Heart left ventricle (tissue), 16 donors: ENCODE measurements at regions of chr11 and their contacts with region 1.

Region 1: GRCh38 chr11:16809886-16810668 is 71.6 kb downstream of the C11orf58 start:
- DNase-seq: peak; percentile 74 to 91 (median 79)
- ATAC-seq: peak; percentile 76 to 86 (median 78)
- H3K4me3 ChIP-seq: no peak overlapping the region
- H3K27ac ChIP-seq: peak overlapping the region in 10 of 12 donors; percentile 18 to 79 (median 44)
- H3K4me1 ChIP-seq: peaks cover 4 to 97% (median 36%) of the 10 kb centered on the region in 12 donors
- H3K27me3 ChIP-seq: no peaks in the 10 kb centered on the region
- CTCF ChIP-seq: no peak
- POLR2A ChIP-seq: no peak

Region 2: DNA sequence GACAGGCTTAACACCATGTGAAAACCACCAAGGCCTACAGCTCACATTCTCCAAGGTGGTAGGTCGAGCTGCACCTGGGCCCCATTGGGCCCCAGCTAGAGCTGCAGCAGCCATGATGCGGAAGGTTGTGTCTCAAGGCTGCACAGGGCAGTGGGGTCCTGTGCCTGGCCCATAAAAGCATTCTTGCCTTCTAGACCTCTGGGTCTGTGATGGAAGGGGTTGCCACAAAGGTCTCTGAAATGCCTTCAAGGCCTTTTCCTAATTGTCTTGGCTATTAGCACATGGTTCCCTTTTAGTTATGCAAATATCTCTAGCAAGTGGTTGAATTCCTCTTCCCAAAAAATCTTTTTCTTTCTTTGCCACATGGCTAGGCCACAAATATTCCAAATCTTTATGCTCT is 124.2 kb before region 1 on chr11:
- intact Hi-C with region 1: no loop called
- DNase-seq: no peak
- ATAC-seq: no peak
- H3K4me3 ChIP-seq: no peak overlapping the region
- H3K27ac ChIP-seq: no peak overlapping the region
- H3K4me1 ChIP-seq: no peaks in the 10 kb centered on the region
- H3K27me3 ChIP-seq: no peaks in the 10 kb centered on the region
- CTCF ChIP-seq: no peak
- POLR2A ChIP-seq: no peak

Region 3: DNA sequence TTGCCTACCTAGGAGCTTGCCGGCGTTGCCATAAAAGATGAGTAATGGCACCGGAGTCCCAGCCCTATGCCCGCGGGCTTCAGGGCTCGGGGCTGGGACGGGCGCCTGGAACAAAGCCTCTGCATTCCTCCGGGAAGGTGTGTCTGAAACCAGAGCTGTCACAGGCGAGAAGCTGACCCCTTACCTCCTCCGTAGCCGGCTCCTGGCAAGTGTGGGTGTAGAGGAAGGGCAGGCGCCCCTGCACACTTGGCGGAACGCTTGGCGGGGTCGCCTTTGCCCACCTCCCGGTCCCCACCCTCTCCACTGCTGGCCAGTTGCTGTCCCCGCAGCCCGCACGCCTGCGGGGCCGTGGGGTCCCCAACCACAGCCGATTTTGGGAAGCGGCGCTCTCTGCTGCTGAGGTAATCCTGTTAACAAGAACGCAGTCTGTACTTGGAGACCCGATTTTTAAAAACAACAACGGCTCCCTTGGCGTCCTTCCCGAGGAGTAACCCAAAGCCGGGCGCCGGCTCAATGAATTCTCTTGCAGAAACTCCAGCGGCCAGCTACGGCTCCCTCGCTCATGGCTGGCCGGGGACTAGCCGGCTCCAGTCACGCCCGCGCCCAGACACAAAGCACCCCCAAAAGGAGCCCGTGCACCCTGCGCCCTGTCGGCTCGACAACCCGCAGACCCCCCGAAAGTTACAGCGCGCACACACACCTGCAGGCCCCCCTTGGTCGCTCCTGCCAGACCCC is 114.9 kb after region 1 on chr11:
- intact Hi-C with region 1: loop called in 3 of 10 experiments (anchors 5 to 10 kb)
- DNase-seq: peak; percentile 31 to 71 (median 62)
- ATAC-seq: peak; percentile 6 to 69 (median 52)
- H3K4me3 ChIP-seq: peak overlapping the region; percentile 37 to 79 (median 60)
- H3K27ac ChIP-seq: peak overlapping the region in 11 of 12 donors; percentile 32 to 90 (median 75)
- H3K4me1 ChIP-seq: peaks cover 0 to 51% (median 13%) of the 10 kb centered on the region in 12 donors
- H3K27me3 ChIP-seq: peaks cover 0 to 40% (median 0%) of the 10 kb centered on the region in 9 donors
- CTCF ChIP-seq: peak in 1 of 12 donors; percentile 11
- POLR2A ChIP-seq: no peak

Region 4: DNA sequence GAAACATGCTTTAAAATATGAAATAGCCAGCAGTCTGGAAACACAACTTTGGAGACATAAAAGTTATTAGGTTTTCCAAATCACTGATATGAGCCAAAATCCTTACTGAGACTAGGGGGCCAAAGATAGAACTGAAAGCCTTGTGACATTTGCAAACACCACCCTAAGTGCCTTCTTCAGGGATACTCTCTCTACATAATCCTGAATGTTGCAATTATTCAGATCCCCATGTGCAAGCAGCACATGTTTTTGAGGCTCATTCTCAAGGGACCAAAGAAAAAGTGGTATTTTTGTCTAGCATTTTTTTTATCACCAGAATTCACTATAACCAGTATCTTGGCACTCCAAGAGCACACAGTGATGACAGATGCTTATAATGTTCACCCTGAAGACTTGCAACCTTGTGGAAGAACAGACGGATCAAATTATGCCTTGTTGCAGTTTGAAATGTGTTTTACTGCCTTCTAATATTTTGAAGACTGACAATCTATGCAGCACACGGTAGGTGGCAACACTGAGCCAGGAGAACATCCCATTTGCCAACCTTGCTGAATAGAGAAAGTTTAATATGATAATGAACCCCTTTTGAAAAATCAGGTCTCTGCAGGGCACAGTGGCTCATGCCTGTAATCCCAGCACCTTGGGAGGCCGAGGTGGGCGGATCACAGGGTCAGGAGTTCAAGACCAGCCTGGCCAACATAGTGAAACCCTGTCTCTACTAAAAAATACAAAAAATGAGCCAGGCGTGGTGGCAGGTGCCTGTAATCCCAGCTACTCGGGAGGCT is 125.6 kb after region 1 on chr11:
- intact Hi-C with region 1: loop called in 2 of 10 experiments (anchors 10 kb)
- DNase-seq: peak in 1 of 5 donors; percentile 31
- ATAC-seq: peak in 3 of 4 donors; percentile 16 to 69 (median 40)
- H3K4me3 ChIP-seq: no peak overlapping the region
- H3K27ac ChIP-seq: peak overlapping the region in 11 of 12 donors; percentile 30 to 87 (median 64)
- H3K4me1 ChIP-seq: peaks cover 0 to 43% (median 20%) of the 10 kb centered on the region in 12 donors
- H3K27me3 ChIP-seq: no peaks in the 10 kb centered on the region
- CTCF ChIP-seq: peak; percentile 41 to 74 (median 56)
- POLR2A ChIP-seq: no peak

Region 5: GRCh38 chr11:16993495-16993894 is 183.4 kb after region 1 on chr11:
- intact Hi-C with region 1: no loop called
- DNase-seq: no peak
- ATAC-seq: no peak
- H3K4me3 ChIP-seq: no peak overlapping the region
- H3K27ac ChIP-seq: no peak overlapping the region
- H3K4me1 ChIP-seq: peaks cover 0 to 27% (median 14%) of the 10 kb centered on the region in 12 donors
- H3K27me3 ChIP-seq: no peaks in the 10 kb centered on the region
- CTCF ChIP-seq: no peak
- POLR2A ChIP-seq: no peak

Region 6: GRCh38 chr11:17063171-17064002 is 253.3 kb after region 1 on chr11:
- intact Hi-C with region 1: loop called in 2 of 10 experiments (anchors 10 kb)
- DNase-seq: peak; percentile 57 to 79 (median 68)
- ATAC-seq: peak; percentile 55 to 96 (median 94)
- H3K4me3 ChIP-seq: no peak overlapping the region
- H3K27ac ChIP-seq: no peak overlapping the region
- H3K4me1 ChIP-seq: no peaks in the 10 kb centered on the region
- H3K27me3 ChIP-seq: no peaks in the 10 kb centered on the region
- CTCF ChIP-seq: peak; percentile 59 to 89 (median 76)
- POLR2A ChIP-seq: no peak

Region 7: GRCh38 chr11:17730608-17731462 is 920.8 kb after region 1 on chr11:
- intact Hi-C with region 1: no loop called
- DNase-seq: peak; percentile 77 to 85 (median 84)
- ATAC-seq: peak; percentile 90 to 94 (median 92)
- H3K4me3 ChIP-seq: no peak overlapping the region
- H3K27ac ChIP-seq: no peak overlapping the region
- H3K4me1 ChIP-seq: peaks cover 2 to 20% (median 7%) of the 10 kb centered on the region in 12 donors
- H3K27me3 ChIP-seq: peaks cover 2 to 44% (median 11%) of the 10 kb centered on the region in 9 donors
- CTCF ChIP-seq: peak; percentile 73 to 91 (median 86)
- POLR2A ChIP-seq: no peak